ENCODE measurements at regions of chr10 and their contacts with region 1.

Region 1: DNA sequence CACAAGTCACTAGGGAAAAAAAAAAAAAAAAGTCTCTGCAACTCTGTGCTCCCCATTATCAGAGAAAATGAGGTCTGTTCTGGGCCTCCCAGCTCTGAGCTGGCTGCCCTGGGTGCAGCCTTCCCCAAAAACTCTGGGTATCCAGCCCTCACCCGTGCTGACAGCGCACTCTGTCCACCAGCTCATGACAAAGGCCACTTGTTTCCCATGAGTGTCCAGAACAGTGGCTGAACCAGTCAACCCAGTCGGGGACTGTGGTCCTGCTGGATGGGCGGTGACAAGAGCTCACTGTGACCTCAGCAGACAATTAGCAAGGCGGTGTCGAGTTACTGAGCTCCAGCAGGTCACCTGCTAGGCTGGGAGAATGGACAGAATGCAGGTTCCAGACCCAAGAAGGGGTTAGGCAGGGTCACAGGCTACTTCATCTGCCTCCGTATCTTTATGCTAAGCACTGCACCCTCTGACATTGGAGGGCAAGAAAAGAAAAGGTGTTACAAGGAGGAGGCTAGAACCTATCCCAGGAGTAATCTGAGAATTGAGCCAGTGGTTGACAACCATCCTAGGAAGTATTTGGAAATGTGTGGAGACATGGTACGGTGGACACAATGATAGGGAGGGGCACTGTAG is 37.2 kb downstream of the DLG5 start:
- DNase-seq: peak; percentile 95
- H3K4me3 ChIP-seq: no peak overlapping the region
- H3K4me3 Mint-ChIP-seq: peak overlapping the region; percentile 59
- H3K27ac Mint-ChIP-seq: peak overlapping the region; percentile 86
- H3K4me1 ChIP-seq: peaks cover 35% of the 10 kb centered on the region
- H3K4me1 Mint-ChIP-seq: peaks cover 72% of the 10 kb centered on the region
- H3K27me3 ChIP-seq: no peaks in the 10 kb centered on the region
- H3K27me3 Mint-ChIP-seq: no peaks in the 10 kb centered on the region
- CTCF ChIP-seq: no peak

Region 2: GRCh38 chr10:77857254-77857653 is 32.1 kb before region 1 on chr10:
- CTCF ChIA-PET with region 1: interaction called, 3 read pairs
- POLR2A ChIA-PET with region 1: no interaction called
- intact Hi-C with region 1: loop called (anchors 2 kb)
- DNase-seq: peak; percentile 86
- H3K4me3 ChIP-seq: no peak overlapping the region
- H3K4me3 Mint-ChIP-seq: no peak overlapping the region
- H3K27ac Mint-ChIP-seq: peak overlapping the region; percentile 74
- H3K4me1 ChIP-seq: peaks cover 13% of the 10 kb centered on the region
- H3K4me1 Mint-ChIP-seq: peaks cover 15% of the 10 kb centered on the region
- H3K27me3 ChIP-seq: no peaks in the 10 kb centered on the region
- H3K27me3 Mint-ChIP-seq: no peaks in the 10 kb centered on the region
- CTCF ChIP-seq: no peak

Region 3: GRCh38 chr10:77926566-77927401 is 37.4 kb after region 1 on chr10 and contains the start of gene DLG5:
- CTCF ChIA-PET with region 1: interaction called, 4 read pairs
- POLR2A ChIA-PET with region 1: no interaction called
- intact Hi-C with region 1: loop called (anchors 2 kb)
- DNase-seq: peak; percentile 65 to 70
- H3K4me3 ChIP-seq: peak within 1 kb of the TSS; percentile 93
- H3K4me3 Mint-ChIP-seq: peak within 1 kb of the TSS; percentile 89
- H3K27ac Mint-ChIP-seq: peak within 1 kb of the TSS; percentile 74
- H3K4me1 ChIP-seq: peaks cover 26% of the 10 kb centered on the region
- H3K4me1 Mint-ChIP-seq: peaks cover 28% of the 10 kb centered on the region
- H3K27me3 ChIP-seq: no peaks in the 10 kb centered on the region
- H3K27me3 Mint-ChIP-seq: no peaks in the 10 kb centered on the region
- CTCF ChIP-seq: peak in 1 of 2 experiments; percentile 17
- total RNA-seq, gene DLG5: 65.9 and 69.7 TPM in 2 replicates

Region 4: GRCh38 chr10:78081292-78081691 is 191.9 kb after region 1 on chr10:
- CTCF ChIA-PET with region 1: no interaction called
- POLR2A ChIA-PET with region 1: no interaction called
- intact Hi-C with region 1: no loop called
- DNase-seq: no peak
- H3K4me3 ChIP-seq: no peak overlapping the region
- H3K4me3 Mint-ChIP-seq: no peak overlapping the region
- H3K27ac Mint-ChIP-seq: no peak overlapping the region
- H3K4me1 ChIP-seq: no peaks in the 10 kb centered on the region
- H3K4me1 Mint-ChIP-seq: no peaks in the 10 kb centered on the region
- H3K27me3 ChIP-seq: peaks cover 3% of the 10 kb centered on the region; the same call in 1 of the 2 replicates
- H3K27me3 Mint-ChIP-seq: peaks cover 7% of the 10 kb centered on the region
- CTCF ChIP-seq: no peak

Region 5: DNA sequence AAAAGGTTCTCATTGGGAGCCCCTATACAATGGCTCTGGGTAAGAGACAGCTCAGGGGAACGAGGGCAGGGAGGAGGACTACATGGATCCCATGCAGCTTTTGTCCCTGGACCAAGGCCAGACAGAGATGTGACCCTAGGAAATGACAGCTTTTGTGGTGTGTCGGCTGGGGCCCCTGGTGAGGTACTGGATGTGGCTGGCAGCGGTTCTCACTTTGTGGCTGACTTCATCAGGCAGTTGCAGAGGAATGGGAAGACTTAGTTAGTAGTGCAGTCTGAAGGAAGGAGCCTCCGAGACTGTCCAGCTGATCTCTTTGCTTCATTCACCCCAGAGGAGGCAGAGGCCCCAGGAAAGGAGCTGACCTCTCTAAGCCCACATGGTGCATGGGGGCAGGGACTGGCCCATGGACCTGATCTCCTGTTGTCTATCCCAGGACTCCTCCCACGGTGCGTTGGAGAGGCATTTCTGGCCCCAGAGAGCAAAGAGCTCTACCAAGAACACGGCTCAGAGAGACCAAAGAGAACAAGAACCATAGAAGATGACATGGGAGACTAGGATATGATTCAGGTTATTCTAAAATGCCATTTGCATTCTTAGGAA is 347.1 kb after region 1 on chr10:
- CTCF ChIA-PET with region 1: no interaction called
- POLR2A ChIA-PET with region 1: no interaction called
- intact Hi-C with region 1: no loop called
- DNase-seq: no peak
- H3K4me3 ChIP-seq: no peak overlapping the region
- H3K4me3 Mint-ChIP-seq: no peak overlapping the region
- H3K27ac Mint-ChIP-seq: no peak overlapping the region
- H3K4me1 ChIP-seq: no peaks in the 10 kb centered on the region
- H3K4me1 Mint-ChIP-seq: no peaks in the 10 kb centered on the region
- H3K27me3 ChIP-seq: no peaks in the 10 kb centered on the region
- H3K27me3 Mint-ChIP-seq: no peaks in the 10 kb centered on the region
- CTCF ChIP-seq: no peak

Measured in Caco-2 (cell line).